ENCODE measurements at regions of chr6 and their contacts with region 1.

Region 1: DNA sequence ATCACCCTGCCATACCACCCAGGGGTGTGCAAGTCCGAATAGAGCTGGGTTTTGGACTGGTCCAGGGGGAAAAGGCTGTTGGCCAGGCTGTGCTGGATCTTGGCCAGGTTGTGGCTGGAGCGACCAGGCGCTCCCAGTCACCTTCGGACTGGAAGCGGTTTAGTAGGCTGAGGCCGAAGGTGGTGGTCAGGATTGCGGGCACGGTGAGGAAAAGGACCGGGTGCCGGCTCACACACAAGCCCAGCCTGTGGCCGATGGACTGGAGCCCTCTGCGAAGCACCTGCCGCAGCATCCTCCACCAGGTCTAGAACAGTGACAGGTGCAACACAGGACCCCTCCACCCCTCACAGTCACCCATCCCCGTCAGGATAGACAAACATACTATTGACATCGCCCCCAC is 590.6 kb upstream of the PTCHD4 start:
- DNase-seq: no peak
- ATAC-seq: no peak
- H3K4me3 ChIP-seq: no peak overlapping the region
- H3K27ac ChIP-seq: no peak overlapping the region
- H3K4me1 ChIP-seq: no peaks in the 10 kb centered on the region
- H3K27me3 ChIP-seq: no peaks in the 10 kb centered on the region
- CTCF ChIP-seq: no peak

Region 2: GRCh38 chr6:48736501-48737206 is 35.1 kb after region 1 on chr6:
- CTCF ChIA-PET with region 1: no interaction called
- POLR2A ChIA-PET with region 1: interaction called, 12 read pairs
- intact Hi-C with region 1: no loop called
- DNase-seq: peak; percentile 94
- ATAC-seq: peak; percentile 98
- H3K4me3 ChIP-seq: peak overlapping the region; percentile 11; the same call in 1 of the 2 replicates
- H3K27ac ChIP-seq: peak overlapping the region; percentile 88
- H3K4me1 ChIP-seq: peaks cover 33% of the 10 kb centered on the region
- H3K27me3 ChIP-seq: no peaks in the 10 kb centered on the region
- CTCF ChIP-seq: peak; percentile 45; the same call in 1 of the 2 replicates

Measured in PC-3 (cell line).